MCF 10A (cell line): ENCODE measurements at regions of chr12 and their contacts with region 1.

Region 1: DNA sequence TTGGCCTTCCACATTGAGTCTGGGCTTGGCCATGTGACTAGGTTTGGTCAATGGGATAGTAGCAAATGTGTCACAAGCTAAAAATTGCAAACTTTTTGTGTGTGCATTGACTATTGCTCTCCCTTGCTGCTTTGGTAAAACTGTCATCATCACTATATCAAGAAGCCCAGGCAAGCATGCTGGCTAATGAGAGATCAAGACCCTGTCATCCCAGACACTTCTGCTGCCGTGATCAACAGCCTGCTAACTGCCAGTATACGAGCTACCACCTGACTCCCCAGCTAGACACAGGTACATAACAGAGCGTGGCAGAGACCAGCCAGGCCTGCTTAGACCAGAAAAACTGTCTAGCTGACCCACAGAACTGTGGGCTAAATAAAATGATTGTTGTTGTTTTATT is 456.7 kb upstream of the DCN start:
- DNase-seq: no peak
- H3K4me3 Mint-ChIP-seq: no peak overlapping the region
- H3K27ac Mint-ChIP-seq: no peak overlapping the region
- H3K4me1 Mint-ChIP-seq: peaks cover 7% of the 10 kb centered on the region
- H3K27me3 Mint-ChIP-seq: no peaks in the 10 kb centered on the region
- CTCF ChIP-seq: no peak

Region 2: GRCh38 chr12:91529829-91530228 is 109.5 kb before region 1 on chr12:
- CTCF ChIA-PET with region 1: no interaction called
- POLR2A ChIA-PET with region 1: no interaction called
- intact Hi-C with region 1: no loop called
- DNase-seq: peak; percentile 66
- H3K4me3 Mint-ChIP-seq: no peak overlapping the region
- H3K27ac Mint-ChIP-seq: peak overlapping the region; percentile 59
- H3K4me1 Mint-ChIP-seq: peaks cover 9% of the 10 kb centered on the region
- H3K27me3 Mint-ChIP-seq: no peaks in the 10 kb centered on the region
- CTCF ChIP-seq: no peak

Region 3: GRCh38 chr12:91628366-91629055 is 10.8 kb before region 1 on chr12:
- CTCF ChIA-PET with region 1: interaction called, 3 read pairs
- POLR2A ChIA-PET with region 1: interaction called, 16 read pairs
- intact Hi-C with region 1: no loop called
- DNase-seq: no peak
- H3K4me3 Mint-ChIP-seq: no peak overlapping the region
- H3K27ac Mint-ChIP-seq: no peak overlapping the region
- H3K4me1 Mint-ChIP-seq: no peaks in the 10 kb centered on the region
- H3K27me3 Mint-ChIP-seq: no peaks in the 10 kb centered on the region
- CTCF ChIP-seq: no peak

Region 4: GRCh38 chr12:91763654-91764370 is 124.5 kb after region 1 on chr12:
- CTCF ChIA-PET with region 1: no interaction called
- POLR2A ChIA-PET with region 1: no interaction called
- intact Hi-C with region 1: no loop called
- DNase-seq: no peak
- H3K4me3 Mint-ChIP-seq: no peak overlapping the region
- H3K27ac Mint-ChIP-seq: no peak overlapping the region
- H3K4me1 Mint-ChIP-seq: no peaks in the 10 kb centered on the region
- H3K27me3 Mint-ChIP-seq: no peaks in the 10 kb centered on the region
- CTCF ChIP-seq: no peak

Region 5: DNA sequence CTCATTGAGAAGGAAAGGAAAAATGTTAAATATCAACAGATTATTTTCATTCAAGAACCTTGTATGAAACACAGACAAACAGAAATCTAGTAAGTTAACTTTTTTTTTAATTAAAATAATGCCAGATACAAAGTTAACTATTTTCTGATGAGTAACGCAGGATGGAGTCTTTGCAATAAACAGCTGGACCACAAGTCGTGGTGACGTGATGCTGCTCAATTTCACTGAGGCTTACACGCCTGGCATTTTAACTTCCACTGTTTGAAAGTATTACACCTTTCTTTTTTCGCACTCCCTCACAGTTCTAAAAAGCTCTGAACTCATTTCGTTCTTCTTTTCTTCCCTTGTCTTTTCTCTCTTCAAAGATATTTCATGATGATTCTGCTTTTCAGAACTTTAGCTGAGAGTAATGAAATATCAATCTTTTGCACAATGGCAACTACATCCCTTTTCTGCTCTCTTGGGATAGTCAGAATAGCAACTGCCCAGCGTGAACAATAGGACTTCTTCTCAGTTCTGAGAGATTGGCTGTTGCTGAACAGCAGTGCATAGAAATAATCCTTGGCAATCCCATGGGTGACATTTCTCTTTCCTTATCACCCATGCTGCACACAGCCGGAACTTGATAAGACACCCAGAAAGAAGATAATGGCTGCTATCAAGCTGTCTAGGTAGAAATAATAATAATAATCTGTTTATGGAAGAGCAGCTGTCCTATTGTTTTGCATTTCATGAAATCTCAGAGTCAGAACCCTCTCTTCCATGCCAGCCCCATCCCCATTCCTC is 345.9 kb after region 1 on chr12:
- CTCF ChIA-PET with region 1: no interaction called
- POLR2A ChIA-PET with region 1: no interaction called
- intact Hi-C with region 1: no loop called
- DNase-seq: no peak
- H3K4me3 Mint-ChIP-seq: no peak overlapping the region
- H3K27ac Mint-ChIP-seq: no peak overlapping the region
- H3K4me1 Mint-ChIP-seq: peaks cover 11% of the 10 kb centered on the region
- H3K27me3 Mint-ChIP-seq: no peaks in the 10 kb centered on the region
- CTCF ChIP-seq: no peak